T-cell (primary cell): ENCODE measurements at regions of chr10 and their contacts with region 1.

Region 1: GRCh38 chr10:91088300-91089140 is 131.9 kb upstream of the PCGF5 start:
- DNase-seq: peak in 2 of 35 experiments; percentile 2 to 45
- ATAC-seq: peak; percentile 34 to 74 (median 63)
- H3K4me3 ChIP-seq: no peak overlapping the region
- H3K4me3 Mint-ChIP-seq: no peak overlapping the region
- H3K27ac ChIP-seq: no peak overlapping the region
- H3K27ac Mint-ChIP-seq: no peak overlapping the region
- H3K4me1 ChIP-seq: no peaks in the 10 kb centered on the region
- H3K4me1 Mint-ChIP-seq: peaks cover 0 to 2% (median 0%) of the 10 kb centered on the region in 3 donors
- H3K27me3 ChIP-seq: no peaks in the 10 kb centered on the region
- H3K27me3 Mint-ChIP-seq: no peaks in the 10 kb centered on the region

Region 2: DNA sequence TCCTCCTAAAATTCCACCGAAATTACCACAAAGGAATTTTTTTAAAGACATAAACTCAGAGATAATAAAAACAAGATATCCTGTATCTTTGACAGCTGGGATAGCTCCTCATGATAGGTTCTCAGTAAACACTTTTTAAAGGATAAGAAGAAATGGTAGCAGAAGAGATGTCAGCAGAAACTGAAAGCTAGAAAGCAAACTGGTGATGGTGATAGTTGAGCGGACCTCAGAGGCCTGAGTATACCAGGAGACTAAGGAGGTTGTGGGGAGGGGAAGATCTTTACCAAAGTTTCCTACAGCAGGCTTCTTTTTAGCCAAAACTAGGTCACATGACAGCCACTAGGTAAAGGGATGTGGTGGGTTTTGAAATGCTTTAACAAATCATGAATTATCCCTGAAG is 154.4 kb after region 1 on chr10:
- CTCF ChIA-PET with region 1: interaction called, 4 to 11 read pairs
- POLR2A ChIA-PET with region 1: no interaction called
- DNase-seq: no peak
- ATAC-seq: no peak
- H3K4me3 ChIP-seq: no peak overlapping the region
- H3K4me3 Mint-ChIP-seq: no peak overlapping the region
- H3K27ac ChIP-seq: peak overlapping the region; percentile 13
- H3K27ac Mint-ChIP-seq: peak overlapping the region; percentile 47 to 59
- H3K4me1 ChIP-seq: peaks cover 3 to 13% of the 10 kb centered on the region in 2 experiments
- H3K4me1 Mint-ChIP-seq: peaks cover 29 to 32% (median 29%) of the 10 kb centered on the region in 3 donors
- H3K27me3 ChIP-seq: no peaks in the 10 kb centered on the region
- H3K27me3 Mint-ChIP-seq: no peaks in the 10 kb centered on the region

Region 3: DNA sequence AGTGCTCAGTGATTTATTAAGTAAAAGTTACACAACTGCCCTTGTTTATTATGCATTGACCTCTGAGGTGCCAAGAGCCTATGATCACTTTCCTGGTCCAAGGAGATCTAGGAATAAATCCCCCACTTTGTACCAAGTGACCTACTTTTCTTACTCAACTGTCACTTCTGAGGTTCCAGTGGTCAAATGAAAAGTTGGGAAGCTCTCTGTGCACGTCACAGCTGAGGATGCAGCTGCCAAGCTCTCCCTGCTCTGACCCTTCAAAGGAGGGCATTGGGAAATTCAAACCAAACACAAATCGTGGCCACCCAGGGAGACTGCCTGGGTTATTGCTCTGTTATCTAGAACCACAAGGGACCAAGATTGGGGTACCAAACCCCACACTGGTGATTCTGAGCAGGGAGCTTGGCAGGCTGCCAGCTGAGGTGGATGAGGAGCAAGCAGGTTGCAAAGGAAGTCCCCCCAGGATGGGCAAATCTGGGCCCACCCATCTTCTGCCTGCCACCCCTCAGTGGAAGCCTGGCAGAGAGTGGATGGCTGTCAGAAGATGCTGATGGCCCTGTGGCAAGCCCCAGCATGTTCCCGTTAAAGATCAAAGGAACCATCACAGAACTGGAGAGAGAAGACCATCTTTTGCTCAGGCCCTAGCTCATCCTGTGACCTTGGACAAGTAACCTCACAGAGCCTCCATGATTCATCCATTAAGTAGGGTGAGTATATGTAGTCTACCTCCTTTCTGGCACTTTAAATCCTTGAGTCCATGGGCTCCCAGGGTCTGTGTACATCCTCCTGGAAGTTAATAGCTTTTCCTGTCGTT is 437.6 kb after region 1 on chr10:
- CTCF ChIA-PET with region 1: no interaction called
- POLR2A ChIA-PET with region 1: no interaction called
- DNase-seq: no peak
- ATAC-seq: no peak
- H3K4me3 ChIP-seq: no peak overlapping the region
- H3K4me3 Mint-ChIP-seq: no peak overlapping the region
- H3K27ac ChIP-seq: no peak overlapping the region
- H3K27ac Mint-ChIP-seq: no peak overlapping the region
- H3K4me1 ChIP-seq: no peaks in the 10 kb centered on the region
- H3K4me1 Mint-ChIP-seq: no peaks in the 10 kb centered on the region
- H3K27me3 ChIP-seq: peaks cover 0 to 23% of the 10 kb centered on the region in 2 experiments
- H3K27me3 Mint-ChIP-seq: peaks cover 12 to 23% of the 10 kb centered on the region in 2 donors